Activated CD8-positive, alpha-beta memory T cell treated with anti-CD3 and anti-CD28 coated beads, Interleukin-2, amount 10 ng/mL, durations not matched to agents 7 days and 5 days (primary cell): ENCODE measurements at regions of chr3 and their contacts with region 1.

Region 1: DNA sequence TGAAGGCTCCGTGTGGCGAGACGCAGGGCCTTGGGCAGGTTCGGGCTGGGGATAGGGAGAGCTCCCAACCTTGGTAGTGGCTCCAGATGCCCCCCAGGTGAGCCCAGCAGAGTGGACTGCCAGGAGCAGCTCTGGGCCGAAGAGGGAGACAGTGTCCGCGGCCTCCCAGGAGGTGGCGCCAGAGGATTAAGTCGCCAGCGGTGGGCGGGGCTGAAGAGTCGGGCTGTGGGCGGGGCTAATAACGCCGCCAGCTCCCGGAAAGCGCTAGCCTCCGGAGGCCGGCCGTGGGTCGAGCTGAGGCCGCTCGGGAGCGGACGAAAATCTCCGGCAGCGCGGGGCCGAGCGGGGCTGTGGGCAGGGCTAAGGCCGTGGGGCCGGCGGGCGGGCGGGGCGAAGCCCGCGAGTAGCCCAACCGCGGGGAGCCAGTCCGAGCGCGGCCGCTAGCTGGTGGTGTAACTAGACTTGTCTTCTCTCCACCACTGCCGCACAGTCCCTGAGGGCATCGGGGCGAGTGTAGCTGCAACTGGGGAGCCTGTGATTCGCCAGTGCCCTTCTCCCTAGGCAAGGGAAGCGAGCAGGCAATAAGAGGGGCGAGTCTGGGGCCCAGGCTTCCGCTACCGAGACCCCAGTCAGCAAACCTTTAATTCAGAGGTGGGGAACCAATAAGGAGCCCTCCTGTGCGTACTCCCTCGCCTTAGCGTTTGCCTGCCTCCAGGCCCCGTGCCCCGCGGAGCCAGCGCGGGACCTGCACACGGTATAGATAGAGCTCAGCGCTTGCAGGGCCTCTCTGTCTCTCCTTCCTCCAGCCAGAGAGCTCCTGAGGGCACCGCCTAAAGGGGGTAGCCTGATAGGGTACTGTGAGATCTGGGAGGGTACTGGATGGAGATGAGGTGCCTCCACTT is 14.4 kb upstream of the BSN start:
- DNase-seq: peak; percentile 93
- ATAC-seq: peak; percentile 92
- H3K4me3 Mint-ChIP-seq: peak overlapping the region; percentile 68
- H3K27ac Mint-ChIP-seq: peak overlapping the region; percentile 28
- H3K4me1 Mint-ChIP-seq: peaks cover 3% of the 10 kb centered on the region
- H3K27me3 Mint-ChIP-seq: peaks cover 17% of the 10 kb centered on the region

Region 2: DNA sequence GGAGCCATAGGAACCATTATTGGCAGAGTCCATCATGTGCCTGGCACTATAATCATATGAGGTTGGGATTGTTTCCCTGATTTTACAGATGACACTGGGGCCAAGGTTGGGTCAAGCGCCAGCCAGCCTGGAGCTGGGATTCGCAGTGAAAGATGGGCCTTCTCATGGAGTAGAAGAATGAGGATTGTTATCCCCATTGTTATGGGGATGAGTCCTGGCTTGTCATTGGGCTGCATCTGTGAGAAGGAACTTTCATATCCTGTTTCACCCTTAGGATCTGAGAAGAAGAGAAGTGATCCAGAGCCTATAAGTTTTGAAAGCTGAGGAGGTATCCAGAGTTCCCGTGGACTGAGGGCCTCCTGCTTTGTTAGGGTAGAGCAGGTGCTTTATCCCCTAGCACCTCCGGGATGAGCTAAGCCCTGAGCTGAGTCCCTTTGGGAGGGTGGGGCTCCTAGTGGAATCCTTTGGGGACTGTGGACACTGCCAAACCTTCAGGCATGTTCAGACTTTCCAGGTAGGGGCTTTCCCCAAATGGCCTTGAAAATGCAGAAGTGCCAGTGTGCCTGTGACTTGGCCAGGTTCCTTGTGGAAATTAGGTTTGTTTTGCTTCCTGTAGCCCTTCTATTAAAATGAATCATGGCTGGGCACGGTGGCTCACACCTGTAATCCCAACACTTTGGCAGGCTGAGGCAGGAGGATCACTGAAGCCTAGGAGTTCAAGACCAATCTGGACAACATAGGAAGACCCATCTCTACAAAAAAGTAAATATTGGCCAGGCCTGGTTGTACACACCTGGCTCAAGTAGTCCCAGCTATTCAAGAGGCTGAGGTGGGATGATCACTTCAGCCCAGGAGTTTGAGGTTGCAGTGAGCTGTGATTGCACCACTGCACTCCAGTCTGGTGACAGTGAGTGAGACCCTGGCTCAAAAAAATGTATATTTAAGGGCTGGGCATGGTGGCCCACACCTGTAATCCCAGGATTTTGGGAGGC is 15.9 kb before region 1 on chr3:
- CTCF ChIA-PET with region 1: interaction called, 14 read pairs
- DNase-seq: no peak
- ATAC-seq: no peak
- H3K4me3 Mint-ChIP-seq: no peak overlapping the region
- H3K27ac Mint-ChIP-seq: no peak overlapping the region
- H3K4me1 Mint-ChIP-seq: peaks cover 9% of the 10 kb centered on the region
- H3K27me3 Mint-ChIP-seq: no peaks in the 10 kb centered on the region

Region 3: GRCh38 chr3:49591615-49592014 is 51.7 kb after region 1 on chr3:
- CTCF ChIA-PET with region 1: no interaction called
- DNase-seq: no peak
- ATAC-seq: no peak
- H3K4me3 Mint-ChIP-seq: no peak overlapping the region
- H3K27ac Mint-ChIP-seq: no peak overlapping the region
- H3K4me1 Mint-ChIP-seq: peaks cover 7% of the 10 kb centered on the region
- H3K27me3 Mint-ChIP-seq: peaks cover 17% of the 10 kb centered on the region

Region 4: DNA sequence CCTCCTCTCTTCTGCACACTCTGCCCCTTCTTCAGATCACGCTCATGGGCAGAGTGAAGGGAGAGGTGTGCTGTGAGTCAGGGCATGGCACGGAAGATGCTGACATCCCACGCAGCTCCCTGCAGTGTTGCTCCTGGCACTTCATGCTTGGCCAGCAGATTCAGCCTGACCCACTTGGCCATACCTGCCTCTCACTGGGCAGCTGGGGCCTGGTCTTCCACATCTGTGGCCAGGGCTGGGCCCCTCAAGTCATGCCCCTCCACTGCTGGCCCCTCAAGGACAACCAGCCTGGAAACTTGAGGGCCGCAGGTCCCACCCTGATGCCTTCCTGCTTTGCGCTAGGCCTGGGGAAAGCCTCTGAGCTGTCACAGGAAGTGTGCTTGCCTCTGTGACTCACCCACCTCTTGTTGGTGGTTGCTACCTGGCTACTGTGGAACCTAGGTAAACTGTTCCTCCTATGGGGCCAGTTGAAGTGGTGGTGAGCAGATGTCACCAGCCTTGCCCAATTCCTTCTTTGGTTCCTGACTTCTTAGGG is 63.0 kb after region 1 on chr3:
- CTCF ChIA-PET with region 1: interaction called, 19 read pairs
- DNase-seq: peak; percentile 81
- ATAC-seq: peak; percentile 96
- H3K4me3 Mint-ChIP-seq: no peak overlapping the region
- H3K27ac Mint-ChIP-seq: peak overlapping the region; percentile 79
- H3K4me1 Mint-ChIP-seq: peaks cover 23% of the 10 kb centered on the region
- H3K27me3 Mint-ChIP-seq: no peaks in the 10 kb centered on the region

Region 5: DNA sequence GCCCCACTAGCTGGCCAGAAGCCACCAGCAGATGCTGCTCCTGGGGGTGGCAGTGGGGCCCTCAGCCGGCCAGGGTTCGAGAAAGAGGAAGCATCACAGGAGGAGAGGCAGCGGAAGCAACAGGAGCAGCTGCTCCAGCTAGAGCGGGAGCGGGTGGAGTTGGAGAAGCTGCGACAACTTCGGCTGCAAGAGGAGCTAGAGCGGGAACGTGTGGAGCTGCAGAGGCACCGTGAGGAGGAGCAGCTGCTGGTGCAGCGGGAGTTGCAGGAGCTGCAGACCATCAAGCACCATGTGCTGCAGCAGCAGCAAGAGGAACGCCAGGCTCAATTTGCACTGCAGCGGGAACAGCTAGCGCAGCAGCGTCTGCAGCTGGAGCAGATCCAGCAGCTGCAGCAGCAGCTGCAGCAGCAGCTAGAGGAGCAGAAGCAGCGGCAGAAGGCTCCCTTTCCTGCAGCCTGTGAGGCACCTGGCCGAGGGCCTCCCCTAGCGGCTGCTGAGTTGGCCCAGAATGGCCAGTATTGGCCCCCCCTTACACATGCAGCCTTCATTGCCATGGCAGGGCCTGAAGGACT is 116.7 kb after region 1 on chr3:
- CTCF ChIA-PET with region 1: interaction called, 33 read pairs
- DNase-seq: no peak
- ATAC-seq: peak; percentile 23
- H3K4me3 Mint-ChIP-seq: no peak overlapping the region
- H3K27ac Mint-ChIP-seq: no peak overlapping the region
- H3K4me1 Mint-ChIP-seq: no peaks in the 10 kb centered on the region
- H3K27me3 Mint-ChIP-seq: no peaks in the 10 kb centered on the region

Region 6: DNA sequence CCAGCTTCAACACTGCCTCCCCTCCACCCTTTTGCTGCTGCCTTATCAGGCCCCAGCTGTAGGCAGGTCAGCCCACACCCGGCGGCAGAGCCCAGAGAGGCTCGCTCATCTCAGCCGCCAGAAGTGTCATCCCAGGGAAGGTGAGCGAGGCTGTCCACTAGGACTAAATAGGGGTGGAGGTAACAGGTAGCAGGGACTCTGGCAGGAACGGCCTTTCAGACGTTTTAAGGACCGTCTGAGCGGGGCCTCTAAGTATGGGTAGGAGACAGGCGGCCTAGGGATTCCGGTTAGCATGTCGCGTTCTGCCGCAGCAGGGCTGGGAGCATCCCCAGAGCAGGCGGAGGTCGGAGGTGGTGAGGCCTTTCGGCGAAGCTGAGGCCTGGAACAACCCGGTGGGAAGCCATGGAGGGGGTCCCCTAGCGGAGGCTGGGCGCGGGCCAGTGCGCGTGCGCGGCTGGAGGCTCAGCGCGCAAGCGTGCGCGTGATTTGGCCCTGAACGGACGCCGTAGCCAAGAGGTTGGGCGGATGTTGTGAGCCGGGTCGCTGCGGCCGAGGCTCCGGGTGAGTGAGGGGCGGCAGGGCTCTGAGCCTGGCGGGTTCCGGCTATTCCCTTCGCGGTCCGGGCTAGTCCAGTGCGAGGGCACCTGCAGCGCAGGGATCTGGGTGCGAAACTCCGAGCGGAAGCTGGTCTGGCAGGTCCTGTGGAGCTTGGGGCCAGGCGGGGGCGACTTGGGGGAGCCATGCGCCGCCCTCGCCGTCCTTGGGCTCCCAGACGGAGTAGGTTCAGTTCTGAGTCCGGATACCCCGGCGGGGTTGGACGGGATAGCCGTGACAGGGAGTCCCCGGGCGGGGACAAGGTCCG is 149.4 kb after region 1 on chr3 and contains the starts of genes MST1 and RNF123:
- CTCF ChIA-PET with region 1: interaction called, 10 read pairs
- DNase-seq: peak; percentile 93
- ATAC-seq: peak; percentile 83
- H3K4me3 Mint-ChIP-seq: peak within 1 kb of the TSS; percentile 90
- H3K27ac Mint-ChIP-seq: peak within 1 kb of the TSS; percentile 92
- H3K4me1 Mint-ChIP-seq: peaks cover 31% of the 10 kb centered on the region
- H3K27me3 Mint-ChIP-seq: peaks cover 6% of the 10 kb centered on the region
- total RNA-seq, gene MST1: 7.3 to 9.3 TPM
- total RNA-seq, gene RNF123: 50.0 to 58.9 TPM